ENCODE measurements at regions of chr21 and their contacts with region 1.

Region 1: GRCh38 chr21:17925000-17925610 is 105.9 kb upstream of the C21orf91 start:
- DNase-seq: peak; percentile 67
- H3K4me3 Mint-ChIP-seq: no peak overlapping the region
- H3K27ac Mint-ChIP-seq: no peak overlapping the region
- H3K4me1 Mint-ChIP-seq: no peaks in the 10 kb centered on the region
- H3K27me3 Mint-ChIP-seq: peaks cover 8% of the 10 kb centered on the region

Region 2: DNA sequence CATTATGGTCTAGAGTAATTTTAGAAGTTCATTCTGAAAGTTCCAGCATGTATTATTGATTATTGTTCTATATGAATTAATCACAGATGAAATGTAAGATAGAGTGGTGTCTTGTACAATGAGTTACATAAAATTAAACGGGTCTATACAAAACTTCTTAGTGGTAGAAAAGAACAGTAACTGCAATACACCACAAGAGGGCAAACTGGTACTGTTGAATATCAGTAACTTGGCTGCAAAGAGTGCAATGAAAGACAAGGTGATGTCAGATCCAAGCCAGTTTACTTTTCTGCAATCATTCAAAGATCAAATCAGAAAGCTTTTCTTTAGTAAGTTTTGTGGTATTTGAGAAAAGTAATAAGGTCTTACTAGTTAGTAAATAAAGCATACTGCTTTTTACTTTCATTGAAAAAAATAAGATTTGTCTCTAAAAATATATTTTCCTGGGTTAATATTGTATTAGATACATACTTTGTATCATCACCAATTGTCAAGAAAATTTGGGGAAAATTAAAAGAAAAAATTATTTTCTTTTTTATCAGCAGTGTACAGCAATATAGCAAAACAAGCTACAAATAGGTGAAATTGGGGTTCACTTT is 246.0 kb before region 1 on chr21:
- CTCF ChIA-PET with region 1: interaction called, 26 read pairs
- DNase-seq: no peak
- H3K4me3 Mint-ChIP-seq: no peak overlapping the region
- H3K27ac Mint-ChIP-seq: no peak overlapping the region
- H3K4me1 Mint-ChIP-seq: no peaks in the 10 kb centered on the region
- H3K27me3 Mint-ChIP-seq: no peaks in the 10 kb centered on the region

Region 3: GRCh38 chr21:17903029-17903806 is 21.9 kb before region 1 on chr21:
- CTCF ChIA-PET with region 1: interaction called, 19 read pairs
- DNase-seq: no peak
- H3K4me3 Mint-ChIP-seq: no peak overlapping the region
- H3K27ac Mint-ChIP-seq: no peak overlapping the region
- H3K4me1 Mint-ChIP-seq: peaks cover 22% of the 10 kb centered on the region
- H3K27me3 Mint-ChIP-seq: no peaks in the 10 kb centered on the region

Region 4: GRCh38 chr21:17911628-17912027 is 13.5 kb before region 1 on chr21:
- CTCF ChIA-PET with region 1: interaction called, 11 read pairs
- DNase-seq: no peak
- H3K4me3 Mint-ChIP-seq: no peak overlapping the region
- H3K27ac Mint-ChIP-seq: no peak overlapping the region
- H3K4me1 Mint-ChIP-seq: no peaks in the 10 kb centered on the region
- H3K27me3 Mint-ChIP-seq: no peaks in the 10 kb centered on the region

Measured in activated naive CD4-positive, alpha-beta T cell treated with anti-CD3 and anti-CD28 coated beads, Interleukin-2, amount 10 ng/mL, durations not matched to agents 7 days and 5 days (primary cell).